OCI-LY7 (cell line): ENCODE measurements at regions of chr4 and their contacts with region 1.

Region 1: DNA sequence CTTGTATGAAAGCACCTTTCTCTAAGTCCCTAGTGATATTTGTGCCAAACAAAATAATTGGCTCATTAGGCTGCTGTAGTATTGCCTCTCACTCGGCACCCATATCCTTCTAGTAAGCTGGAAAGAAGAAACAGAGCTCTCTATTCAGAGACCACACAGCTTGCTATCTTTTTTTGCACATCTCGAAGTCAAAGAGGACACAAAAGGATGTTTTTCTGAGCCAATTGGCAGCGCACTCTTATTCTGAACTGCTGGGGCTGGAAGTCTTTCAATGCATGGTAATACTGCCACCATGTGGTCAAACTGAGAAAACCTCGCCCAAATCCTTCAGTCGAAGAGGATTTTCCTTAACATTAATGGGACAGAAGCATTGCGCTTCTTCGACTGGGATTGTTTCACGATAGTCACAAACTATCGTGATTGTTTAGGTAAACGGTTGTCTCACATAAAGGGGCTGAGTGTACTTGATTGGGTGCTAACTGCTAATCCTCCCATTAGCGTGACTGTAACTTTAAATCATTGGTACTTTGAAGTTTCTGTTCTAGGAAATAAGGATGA is 572.0 kb upstream of the LCORL start:
- DNase-seq: peak; percentile 71
- H3K4me3 ChIP-seq: no peak overlapping the region
- H3K27ac ChIP-seq: no peak overlapping the region
- H3K4me1 ChIP-seq: no peaks in the 10 kb centered on the region
- CTCF ChIP-seq: peak; percentile 91

Region 2: GRCh38 chr4:17552427-17552826 is 1041.1 kb before region 1 on chr4:
- CTCF ChIA-PET with region 1: no interaction called
- POLR2A ChIA-PET with region 1: interaction called, 3 read pairs
- intact Hi-C with region 1: loop called (anchors 5 kb)
- DNase-seq: no peak
- H3K4me3 ChIP-seq: no peak overlapping the region
- H3K27ac ChIP-seq: no peak overlapping the region
- H3K4me1 ChIP-seq: no peaks in the 10 kb centered on the region
- CTCF ChIP-seq: no peak

Region 3: GRCh38 chr4:17636696-17637622 is 956.6 kb before region 1 on chr4:
- CTCF ChIA-PET with region 1: no interaction called
- POLR2A ChIA-PET with region 1: no interaction called
- intact Hi-C with region 1: loop called (anchors 5 kb)
- DNase-seq: peak; percentile 81
- H3K4me3 ChIP-seq: no peak overlapping the region
- H3K27ac ChIP-seq: no peak overlapping the region
- H3K4me1 ChIP-seq: no peaks in the 10 kb centered on the region
- CTCF ChIP-seq: peak; percentile 88

Region 4: DNA sequence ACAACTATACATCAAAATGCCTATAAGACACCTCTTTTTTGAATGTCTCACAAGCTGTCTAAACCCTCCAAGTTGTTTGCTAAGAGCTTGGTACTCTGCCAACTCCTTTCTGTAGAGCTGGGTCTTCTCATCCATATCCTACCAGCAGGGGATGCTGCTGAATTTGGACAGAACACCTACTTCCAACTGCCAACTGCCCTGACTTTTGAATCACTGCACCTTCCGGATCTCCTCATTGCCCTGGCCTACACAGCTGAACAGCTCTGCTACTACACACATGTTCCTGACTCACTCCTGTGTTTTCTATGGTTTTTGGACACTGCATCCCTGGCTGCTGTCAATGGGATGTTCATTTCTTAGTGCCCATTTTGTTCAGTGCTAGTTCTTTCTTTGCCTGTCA is 830.8 kb before region 1 on chr4:
- CTCF ChIA-PET with region 1: no interaction called
- POLR2A ChIA-PET with region 1: no interaction called
- intact Hi-C with region 1: loop called (anchors 10 kb)
- DNase-seq: peak; percentile 23
- H3K4me3 ChIP-seq: no peak overlapping the region
- H3K27ac ChIP-seq: no peak overlapping the region
- H3K4me1 ChIP-seq: no peaks in the 10 kb centered on the region
- CTCF ChIP-seq: peak; percentile 45; the same call in 1 of the 2 replicates

Region 5: GRCh38 chr4:18069810-18070209 is 523.7 kb before region 1 on chr4:
- CTCF ChIA-PET with region 1: no interaction called
- POLR2A ChIA-PET with region 1: no interaction called
- intact Hi-C with region 1: loop called (anchors 10 kb)
- DNase-seq: no peak
- H3K4me3 ChIP-seq: no peak overlapping the region
- H3K27ac ChIP-seq: no peak overlapping the region
- H3K4me1 ChIP-seq: no peaks in the 10 kb centered on the region
- CTCF ChIP-seq: no peak